Activated naive CD4-positive, alpha-beta T cell treated with anti-CD3 and anti-CD28 coated beads for 36 hours (primary cell): ENCODE measurements at regions of chr2 and their contacts with region 1.

Region 1: GRCh38 chr2:230712443-230713330 is at the start of gene CAB39:
- DNase-seq: peak; percentile 84
- H3K4me3 Mint-ChIP-seq: peak within 1 kb of the TSS; percentile 90
- H3K27ac Mint-ChIP-seq: peak within 1 kb of the TSS; percentile 94
- H3K4me1 Mint-ChIP-seq: peaks cover 40% of the 10 kb centered on the region
- H3K27me3 Mint-ChIP-seq: no peaks in the 10 kb centered on the region
- total RNA-seq, gene CAB39: 86.6 to 97.5 TPM

Region 2: DNA sequence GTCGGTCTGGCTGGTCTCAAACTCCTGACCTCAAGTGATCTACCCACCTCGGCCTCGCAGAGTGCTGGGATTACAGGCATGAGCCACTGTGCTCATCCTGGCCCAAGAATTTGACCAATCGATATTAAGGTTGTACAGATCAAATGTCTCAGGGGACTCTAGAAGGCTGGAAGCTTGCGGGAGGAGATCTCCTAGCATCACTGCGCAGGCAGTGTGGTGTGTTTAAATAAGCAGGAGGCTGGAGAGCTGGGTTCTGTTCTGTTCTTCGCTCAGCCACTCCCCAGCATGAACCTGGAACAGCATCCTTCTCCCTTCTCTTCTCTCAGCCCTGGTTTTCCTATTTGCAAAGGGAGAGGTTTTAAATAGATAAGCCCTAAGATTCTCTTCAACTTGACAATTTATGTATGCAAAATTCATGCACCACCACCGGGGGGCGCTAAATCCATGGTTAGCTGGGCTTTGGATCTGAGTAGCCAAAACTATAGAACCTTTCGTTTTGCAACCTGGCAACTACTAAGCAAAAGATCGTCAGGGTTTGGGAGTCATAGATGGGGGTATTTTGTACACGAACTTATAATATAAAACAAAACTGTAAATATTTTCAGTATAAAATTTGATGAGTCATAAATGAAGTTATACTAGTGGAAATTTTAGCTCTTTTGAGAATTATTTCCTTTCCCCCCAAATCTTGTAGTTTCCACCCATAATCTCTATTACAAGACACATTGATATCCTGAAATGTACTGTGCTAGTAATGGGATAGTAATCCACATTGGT is 704.6 kb before region 1 on chr2:
- CTCF ChIA-PET with region 1: no interaction called
- intact Hi-C with region 1: loop called (anchors 10 kb)
- DNase-seq: peak; percentile 95
- H3K4me3 Mint-ChIP-seq: no peak overlapping the region
- H3K27ac Mint-ChIP-seq: no peak overlapping the region
- H3K4me1 Mint-ChIP-seq: peaks cover 5% of the 10 kb centered on the region
- H3K27me3 Mint-ChIP-seq: no peaks in the 10 kb centered on the region

Region 3: DNA sequence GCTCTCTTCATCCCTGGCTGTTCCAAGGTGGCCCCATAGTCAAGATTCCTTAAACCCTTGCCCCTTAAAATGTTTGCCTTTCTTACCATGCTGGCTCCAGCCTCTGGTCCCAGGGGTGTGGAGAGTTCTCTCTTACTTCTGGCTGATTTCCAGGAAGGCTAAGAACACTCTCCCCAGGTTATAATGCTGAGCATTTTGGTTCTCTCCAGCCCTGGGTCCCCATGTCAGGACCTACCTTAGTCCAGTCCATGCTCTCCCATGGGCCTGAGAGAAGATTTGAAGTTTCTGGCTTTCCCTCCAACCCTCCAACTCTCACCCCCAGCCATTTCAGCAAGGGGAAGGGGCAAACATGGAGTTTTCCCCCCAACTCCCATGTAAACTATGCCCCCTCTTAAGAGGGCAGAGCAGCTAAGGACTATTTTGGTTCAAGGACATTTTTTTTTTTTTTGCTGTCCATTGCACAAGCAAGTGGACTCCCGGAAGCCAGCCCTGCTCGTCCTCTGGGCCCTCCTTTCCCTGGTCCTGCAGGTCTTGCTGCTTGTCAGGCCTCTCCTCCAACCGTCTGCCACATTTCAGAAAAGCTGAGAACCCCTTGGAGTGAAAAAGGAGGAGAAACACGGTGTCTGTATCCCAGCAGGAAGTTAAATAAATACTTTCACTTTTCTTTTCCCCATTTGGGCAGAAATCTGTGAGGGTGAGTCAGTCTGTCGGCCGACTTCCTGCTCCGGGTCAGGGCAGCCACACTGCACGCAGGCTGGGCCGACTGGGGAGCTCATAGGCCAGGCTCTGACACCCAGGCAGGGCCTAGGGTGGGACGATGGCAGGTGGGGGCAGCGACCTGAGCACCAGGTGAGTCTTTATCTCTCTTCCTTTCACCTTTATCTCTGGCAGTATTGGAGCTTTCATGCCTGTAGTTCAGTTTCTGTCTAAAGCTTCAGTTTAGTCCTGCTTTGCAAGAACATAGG is 386.0 kb before region 1 on chr2 and contains the start of gene SP140L:
- CTCF ChIA-PET with region 1: no interaction called
- intact Hi-C with region 1: loop called (anchors 5 kb)
- DNase-seq: peak; percentile 88
- H3K4me3 Mint-ChIP-seq: peak within 1 kb of the TSS; percentile 96
- H3K27ac Mint-ChIP-seq: peak within 1 kb of the TSS; percentile 99
- H3K4me1 Mint-ChIP-seq: peaks cover 60% of the 10 kb centered on the region
- H3K27me3 Mint-ChIP-seq: no peaks in the 10 kb centered on the region
- total RNA-seq, gene SP140L: 41.8 to 44.7 TPM

Region 4: DNA sequence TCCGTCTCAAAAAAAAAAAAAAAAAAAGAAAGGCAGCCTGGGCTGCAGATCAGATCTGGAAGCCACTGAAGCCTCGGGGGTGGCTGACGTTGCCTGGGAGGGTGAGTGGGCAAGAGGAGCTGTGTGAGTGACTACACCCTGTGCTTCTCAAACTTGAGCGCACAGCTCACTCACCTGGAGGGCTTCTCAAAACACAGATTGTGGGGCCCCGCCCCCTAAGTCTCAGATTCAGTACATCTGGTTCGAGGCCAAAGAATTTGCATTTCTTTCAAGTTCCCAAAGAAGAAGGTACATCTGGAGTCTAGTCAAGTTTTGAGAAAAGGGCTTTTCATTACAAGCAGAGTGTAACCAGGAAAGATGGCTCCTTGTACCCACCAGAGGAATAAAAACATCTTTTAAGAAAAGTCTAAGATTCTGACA is 97.8 kb before region 1 on chr2:
- CTCF ChIA-PET with region 1: interaction called, 7 read pairs
- intact Hi-C with region 1: loop called (anchors 5 kb)
- DNase-seq: peak; percentile 79
- H3K4me3 Mint-ChIP-seq: no peak overlapping the region
- H3K27ac Mint-ChIP-seq: peak overlapping the region; percentile 71
- H3K4me1 Mint-ChIP-seq: peaks cover 33% of the 10 kb centered on the region
- H3K27me3 Mint-ChIP-seq: no peaks in the 10 kb centered on the region

Region 5: GRCh38 chr2:230758566-230759480 is 46.1 kb after region 1 on chr2:
- CTCF ChIA-PET with region 1: interaction called, 3 read pairs
- intact Hi-C with region 1: loop called (anchors 2 kb)
- DNase-seq: no peak
- H3K4me3 Mint-ChIP-seq: no peak overlapping the region
- H3K27ac Mint-ChIP-seq: peak overlapping the region; percentile 20
- H3K4me1 Mint-ChIP-seq: peaks cover 60% of the 10 kb centered on the region
- H3K27me3 Mint-ChIP-seq: no peaks in the 10 kb centered on the region